ENCODE measurements at regions of chr1 and their contacts with region 1.

Region 1: GRCh38 chr1:205805082-205805712 is 7.8 kb downstream of the SLC41A1 start:
- DNase-seq: no peak
- ATAC-seq: no peak
- H3K4me3 ChIP-seq: no peak overlapping the region
- H3K27ac ChIP-seq: no peak overlapping the region
- H3K4me1 ChIP-seq: no peaks in the 10 kb centered on the region; the same call in 1 of the 2 replicates
- H3K27me3 ChIP-seq: no peaks in the 10 kb centered on the region
- CTCF ChIP-seq: no peak

Region 2: DNA sequence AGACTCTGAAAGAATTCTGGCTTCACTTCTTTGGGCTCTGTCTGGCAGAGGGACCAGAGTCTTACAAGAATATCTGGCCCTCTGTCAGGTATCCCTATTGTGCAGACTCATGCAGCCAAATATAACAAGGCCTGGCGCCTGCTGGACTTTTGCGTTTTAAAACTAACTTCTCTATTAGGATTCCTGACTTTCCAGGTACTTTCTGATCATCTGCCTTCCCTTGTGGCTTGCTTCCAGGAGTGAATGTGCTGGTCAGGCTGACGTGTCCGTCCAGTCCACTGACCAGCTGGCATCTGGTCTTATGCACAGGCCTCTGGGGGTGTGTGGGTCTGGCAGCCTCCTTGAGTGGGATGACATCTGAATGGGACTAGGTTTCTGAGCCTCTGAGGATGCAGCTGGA is 21.3 kb before region 1 on chr1:
- CTCF ChIA-PET with region 1: interaction called, 16 read pairs
- POLR2A ChIA-PET with region 1: no interaction called
- in situ Hi-C with region 1: no loop called
- intact Hi-C with region 1: no loop called
- DNase-seq: no peak
- ATAC-seq: peak; percentile 30; the same call in 1 of the 2 replicates
- H3K4me3 ChIP-seq: no peak overlapping the region
- H3K27ac ChIP-seq: no peak overlapping the region
- H3K4me1 ChIP-seq: no peaks in the 10 kb centered on the region; the same call in 1 of the 2 replicates
- H3K27me3 ChIP-seq: no peaks in the 10 kb centered on the region
- CTCF ChIP-seq: no peak

Region 3: DNA sequence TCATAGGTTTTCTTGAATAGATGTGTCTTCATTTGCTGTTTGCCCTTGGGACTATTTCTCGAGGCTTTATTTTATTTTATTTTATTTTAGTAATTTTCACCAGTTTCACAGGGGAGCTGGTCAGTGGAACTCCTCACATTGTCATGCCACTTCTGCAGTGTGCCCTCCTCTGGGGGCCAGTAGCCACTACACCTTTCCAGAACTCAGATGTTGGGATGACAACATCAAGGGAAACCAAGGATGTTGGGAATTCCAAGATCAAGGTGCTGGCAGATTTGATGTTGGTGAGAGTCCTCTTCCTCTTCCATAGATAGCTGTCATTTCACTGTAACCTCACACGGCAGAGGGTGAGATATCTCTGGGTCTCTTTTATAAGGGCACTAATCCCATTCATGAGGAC is 102.6 kb after region 1 on chr1:
- CTCF ChIA-PET with region 1: no interaction called
- POLR2A ChIA-PET with region 1: no interaction called
- in situ Hi-C with region 1: no loop called
- intact Hi-C with region 1: no loop called
- DNase-seq: no peak
- ATAC-seq: peak; percentile 85
- H3K4me3 ChIP-seq: no peak overlapping the region
- H3K27ac ChIP-seq: no peak overlapping the region
- H3K4me1 ChIP-seq: no peaks in the 10 kb centered on the region
- H3K27me3 ChIP-seq: peaks cover 2% of the 10 kb centered on the region; the same call in 1 of the 2 replicates
- CTCF ChIP-seq: peak; percentile 82

Region 4: DNA sequence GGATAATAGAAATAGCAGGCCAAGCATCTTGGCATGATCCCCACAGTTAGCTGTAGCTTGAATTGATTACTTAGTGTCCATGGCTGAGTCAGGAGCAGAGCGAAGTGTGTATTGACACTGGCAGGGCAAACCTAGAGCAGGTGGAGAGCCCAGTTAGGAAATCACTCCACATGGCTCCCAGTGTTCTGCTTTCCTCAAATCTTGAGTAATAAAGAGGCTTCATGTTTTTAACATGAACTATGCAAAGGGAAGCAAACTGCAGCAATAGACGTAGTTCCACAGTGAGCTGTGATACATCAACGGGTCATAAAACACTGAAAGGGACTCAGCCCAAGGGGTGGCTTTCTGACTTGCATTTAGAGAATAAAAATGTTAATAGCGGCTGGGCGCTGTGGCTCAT is 276.7 kb after region 1 on chr1:
- CTCF ChIA-PET with region 1: no interaction called
- POLR2A ChIA-PET with region 1: no interaction called
- in situ Hi-C with region 1: no loop called
- intact Hi-C with region 1: no loop called
- DNase-seq: no peak
- ATAC-seq: no peak
- H3K4me3 ChIP-seq: no peak overlapping the region
- H3K27ac ChIP-seq: no peak overlapping the region
- H3K4me1 ChIP-seq: no peaks in the 10 kb centered on the region
- H3K27me3 ChIP-seq: peaks cover 3% of the 10 kb centered on the region
- CTCF ChIP-seq: no peak

Region 5: DNA sequence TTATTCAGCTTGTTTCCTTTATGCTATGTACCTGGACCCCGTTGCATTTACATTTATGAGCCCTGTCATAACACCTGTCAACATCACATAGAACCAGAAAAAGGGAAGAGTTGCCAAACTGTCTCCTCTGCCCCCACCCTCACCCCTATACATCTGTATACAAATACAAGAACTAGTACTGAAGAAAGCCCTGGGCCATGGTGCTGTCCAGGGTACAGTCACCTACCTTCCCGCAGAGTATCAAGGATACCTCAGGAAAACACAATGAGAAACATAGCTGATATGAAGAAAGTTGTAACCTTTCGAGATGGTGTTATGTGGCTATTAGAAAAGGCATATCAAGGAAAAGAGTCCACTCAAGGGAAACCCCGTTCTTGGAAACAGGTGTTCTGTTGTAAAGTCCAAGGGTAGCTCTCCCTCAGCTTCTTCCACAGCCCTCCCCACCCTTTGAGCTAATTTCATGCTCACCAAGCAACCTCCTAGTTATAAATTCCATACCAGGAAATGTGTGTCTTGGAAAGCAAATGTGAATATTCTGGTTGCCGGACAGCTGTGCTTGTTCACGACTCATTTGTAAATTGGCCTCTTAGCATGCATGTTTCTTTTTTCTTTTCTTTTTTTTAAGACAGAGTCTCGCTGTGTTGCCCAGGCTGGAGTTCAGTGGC is 328.7 kb after region 1 on chr1:
- CTCF ChIA-PET with region 1: no interaction called
- POLR2A ChIA-PET with region 1: no interaction called
- in situ Hi-C with region 1: no loop called
- intact Hi-C with region 1: no loop called
- DNase-seq: no peak
- ATAC-seq: no peak
- H3K4me3 ChIP-seq: no peak overlapping the region
- H3K27ac ChIP-seq: no peak overlapping the region
- H3K4me1 ChIP-seq: no peaks in the 10 kb centered on the region
- H3K27me3 ChIP-seq: peaks cover 8% of the 10 kb centered on the region
- CTCF ChIP-seq: no peak

Measured in Panc1 (cell line).